Right ventricle myocardium superior (tissue), 1 donor: ENCODE measurements at regions of chr4 and their contacts with region 1.

Region 1: GRCh38 chr4:122195718-122196117 is 43.6 kb downstream of the BLTP1 start:
- DNase-seq: no peak
- ATAC-seq: no peak

Region 2: DNA sequence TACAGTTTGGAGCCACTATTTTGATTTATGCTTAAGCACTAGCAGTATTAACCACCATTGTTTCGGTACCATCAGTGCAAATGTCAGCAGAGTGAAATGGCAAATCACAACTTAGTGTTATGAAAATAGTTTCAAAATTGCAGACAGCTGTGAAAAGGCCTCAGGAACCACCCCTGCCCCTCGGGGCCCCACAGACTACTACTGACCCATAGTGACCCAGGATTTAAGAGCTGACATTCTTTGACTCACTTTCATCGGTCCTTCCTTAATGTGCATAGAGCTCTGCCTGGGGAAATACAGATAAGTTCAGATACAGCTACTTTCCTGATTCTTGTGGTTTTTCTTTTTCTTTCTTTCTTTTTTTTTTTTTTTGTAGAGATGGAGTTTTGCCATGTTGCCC is 322.1 kb before region 1 on chr4:
- intact Hi-C with region 1: no loop called
- DNase-seq: no peak
- ATAC-seq: no peak

Region 3: GRCh38 chr4:121973816-121974215 is 221.9 kb before region 1 on chr4:
- intact Hi-C with region 1: no loop called
- DNase-seq: no peak
- ATAC-seq: no peak

Region 4: DNA sequence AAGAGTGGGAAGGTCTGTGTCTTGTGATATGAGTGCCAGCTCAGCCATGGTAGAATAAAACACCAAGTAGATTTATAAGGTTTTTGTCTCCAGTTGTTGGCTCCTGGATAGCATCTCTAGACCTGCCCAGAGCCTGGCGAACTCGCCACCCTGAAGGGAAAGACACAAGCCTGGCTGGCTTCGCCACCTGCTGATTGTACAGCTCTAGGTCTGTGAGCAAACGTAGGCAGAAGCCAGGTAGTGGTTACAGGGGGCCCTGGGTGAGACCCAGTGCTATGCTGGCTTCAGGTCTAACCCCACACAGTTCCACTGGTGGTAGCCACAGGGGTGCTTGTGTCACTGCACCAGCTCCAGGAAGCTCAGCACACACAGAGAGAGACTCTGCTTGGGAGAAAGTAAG is 56.9 kb after region 1 on chr4:
- intact Hi-C with region 1: loop called (anchors 10 kb)
- DNase-seq: no peak
- ATAC-seq: no peak